Heart left ventricle (tissue), 16 donors: ENCODE measurements at regions of chr3 and their contacts with region 1.

Region 1: DNA sequence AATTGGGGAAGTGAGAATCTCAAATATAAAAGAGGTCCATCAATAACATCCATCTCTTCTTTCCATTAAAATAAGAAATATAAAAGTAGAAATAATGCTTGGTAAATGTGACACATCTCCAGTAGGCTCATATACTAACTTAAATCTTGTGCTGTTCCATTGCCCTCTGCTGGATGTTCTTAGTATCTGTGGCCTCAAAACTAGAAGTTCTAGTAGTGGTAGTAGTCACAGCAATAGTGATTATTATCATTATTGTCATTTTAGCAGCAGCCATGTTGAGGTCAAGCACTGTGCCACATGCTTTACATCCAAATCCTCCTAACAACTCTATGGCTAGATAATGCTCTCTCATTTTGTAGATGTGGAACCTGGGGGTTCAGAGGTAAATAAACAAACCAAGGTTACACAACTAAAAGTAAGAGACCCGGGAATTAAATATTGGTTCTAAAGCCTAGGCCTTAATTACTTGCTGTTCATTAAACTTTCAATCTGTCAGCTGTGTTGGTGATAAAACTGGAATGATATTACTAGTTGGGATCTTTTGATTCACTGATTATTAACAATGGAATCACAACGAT is 20.2 kb upstream of the BTLA start:
- DNase-seq: peak in 2 of 5 donors; percentile 22 to 29
- ATAC-seq: peak in 3 of 4 donors; percentile 64 to 79 (median 77)
- H3K4me3 ChIP-seq: no peak overlapping the region
- H3K27ac ChIP-seq: no peak overlapping the region
- H3K4me1 ChIP-seq: peaks cover 0 to 9% (median 0%) of the 10 kb centered on the region in 12 donors
- H3K27me3 ChIP-seq: no peaks in the 10 kb centered on the region
- CTCF ChIP-seq: peak; percentile 61 to 87 (median 75)
- POLR2A ChIP-seq: no peak

Region 2: DNA sequence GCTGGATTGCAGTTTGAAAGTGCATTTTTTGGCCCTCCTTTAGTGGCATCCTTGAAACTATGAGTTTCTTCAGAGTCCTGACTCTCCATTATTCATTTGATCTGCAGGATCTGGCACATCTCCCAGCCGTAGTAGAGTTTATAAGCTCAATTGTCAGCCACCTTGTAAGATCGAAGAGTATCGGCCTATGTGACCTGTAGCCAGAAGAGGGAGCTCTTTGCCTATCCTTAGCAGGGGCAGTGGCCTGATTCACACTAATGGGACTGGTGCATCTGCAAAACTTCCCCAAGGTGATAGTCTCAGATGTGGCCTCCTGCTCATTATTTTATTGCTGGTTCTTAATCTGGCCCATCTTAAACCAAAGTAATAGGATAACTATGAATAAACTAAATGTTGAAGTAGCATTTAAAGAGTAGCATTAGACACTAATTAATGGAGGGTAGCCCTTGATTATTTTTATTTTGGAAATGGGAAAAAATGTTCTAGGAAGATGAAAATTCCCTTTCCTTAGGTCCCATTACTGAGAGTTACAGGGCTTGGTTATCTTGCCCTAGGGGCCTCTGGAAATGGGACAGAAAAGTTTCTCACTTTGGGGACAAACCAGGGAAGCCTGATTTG is 407.6 kb before region 1 on chr3:
- intact Hi-C with region 1: loop called in 2 of 10 experiments (anchors 2 to 5 kb)
- DNase-seq: peak in 2 of 5 donors; percentile 39 to 40
- ATAC-seq: peak; percentile 64 to 86 (median 77)
- H3K4me3 ChIP-seq: no peak overlapping the region
- H3K27ac ChIP-seq: no peak overlapping the region
- H3K4me1 ChIP-seq: peaks cover 0 to 15% (median 8%) of the 10 kb centered on the region in 12 donors
- H3K27me3 ChIP-seq: no peaks in the 10 kb centered on the region
- CTCF ChIP-seq: peak; percentile 62 to 82 (median 70)
- POLR2A ChIP-seq: no peak

Region 3: GRCh38 chr3:112128843-112129727 is 390.4 kb before region 1 on chr3:
- intact Hi-C with region 1: loop called in 6 of 10 experiments (anchors 5 to 10 kb)
- DNase-seq: no peak
- ATAC-seq: no peak
- H3K4me3 ChIP-seq: no peak overlapping the region
- H3K27ac ChIP-seq: peak overlapping the region in 1 of 12 donors; percentile 13
- H3K4me1 ChIP-seq: peaks cover 0 to 55% (median 14%) of the 10 kb centered on the region in 12 donors
- H3K27me3 ChIP-seq: no peaks in the 10 kb centered on the region
- CTCF ChIP-seq: no peak
- POLR2A ChIP-seq: no peak

Region 4: DNA sequence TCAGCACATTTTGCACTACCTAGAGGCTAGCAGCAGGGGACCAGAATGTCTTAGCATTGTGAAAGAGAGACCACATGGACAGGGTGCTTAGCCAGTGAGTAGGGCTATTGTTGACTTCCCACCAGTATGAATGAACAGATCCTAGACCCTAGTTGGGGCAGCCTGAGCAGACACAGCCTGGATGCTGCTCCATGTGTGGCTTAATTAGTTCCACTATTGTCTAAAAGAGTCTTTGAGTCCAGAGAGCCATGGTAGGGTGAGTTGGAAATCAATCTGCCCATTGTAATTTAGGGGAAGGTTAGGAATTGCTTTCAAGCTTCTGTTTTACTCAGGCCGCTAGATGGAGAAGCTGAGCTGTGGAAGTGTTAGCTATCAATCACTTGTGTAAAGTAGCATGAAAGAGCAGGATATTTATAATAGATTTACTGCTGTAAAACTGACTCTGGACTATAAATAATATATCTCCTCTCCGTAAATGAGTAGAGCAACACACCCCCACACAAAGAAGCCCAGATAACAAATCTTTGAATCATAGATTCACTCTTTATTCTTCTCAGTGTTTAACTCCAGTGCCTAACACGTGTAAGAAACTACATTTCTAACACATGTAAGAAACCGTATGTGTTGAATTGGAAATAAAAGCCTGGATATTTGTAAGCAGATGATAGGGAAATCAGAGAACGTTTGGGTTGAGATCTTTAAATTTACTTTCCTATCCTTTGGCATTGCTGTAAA is 382.4 kb before region 1 on chr3:
- intact Hi-C with region 1: loop called in 7 of 10 experiments (anchors 5 to 10 kb)
- DNase-seq: no peak
- ATAC-seq: peak in 3 of 4 donors; percentile 38 to 63 (median 57)
- H3K4me3 ChIP-seq: no peak overlapping the region
- H3K27ac ChIP-seq: no peak overlapping the region
- H3K4me1 ChIP-seq: peaks cover 0 to 52% (median 0%) of the 10 kb centered on the region in 12 donors
- H3K27me3 ChIP-seq: no peaks in the 10 kb centered on the region
- CTCF ChIP-seq: peak in 11 of 12 donors; percentile 32 to 64 (median 45)
- POLR2A ChIP-seq: no peak

Region 5: DNA sequence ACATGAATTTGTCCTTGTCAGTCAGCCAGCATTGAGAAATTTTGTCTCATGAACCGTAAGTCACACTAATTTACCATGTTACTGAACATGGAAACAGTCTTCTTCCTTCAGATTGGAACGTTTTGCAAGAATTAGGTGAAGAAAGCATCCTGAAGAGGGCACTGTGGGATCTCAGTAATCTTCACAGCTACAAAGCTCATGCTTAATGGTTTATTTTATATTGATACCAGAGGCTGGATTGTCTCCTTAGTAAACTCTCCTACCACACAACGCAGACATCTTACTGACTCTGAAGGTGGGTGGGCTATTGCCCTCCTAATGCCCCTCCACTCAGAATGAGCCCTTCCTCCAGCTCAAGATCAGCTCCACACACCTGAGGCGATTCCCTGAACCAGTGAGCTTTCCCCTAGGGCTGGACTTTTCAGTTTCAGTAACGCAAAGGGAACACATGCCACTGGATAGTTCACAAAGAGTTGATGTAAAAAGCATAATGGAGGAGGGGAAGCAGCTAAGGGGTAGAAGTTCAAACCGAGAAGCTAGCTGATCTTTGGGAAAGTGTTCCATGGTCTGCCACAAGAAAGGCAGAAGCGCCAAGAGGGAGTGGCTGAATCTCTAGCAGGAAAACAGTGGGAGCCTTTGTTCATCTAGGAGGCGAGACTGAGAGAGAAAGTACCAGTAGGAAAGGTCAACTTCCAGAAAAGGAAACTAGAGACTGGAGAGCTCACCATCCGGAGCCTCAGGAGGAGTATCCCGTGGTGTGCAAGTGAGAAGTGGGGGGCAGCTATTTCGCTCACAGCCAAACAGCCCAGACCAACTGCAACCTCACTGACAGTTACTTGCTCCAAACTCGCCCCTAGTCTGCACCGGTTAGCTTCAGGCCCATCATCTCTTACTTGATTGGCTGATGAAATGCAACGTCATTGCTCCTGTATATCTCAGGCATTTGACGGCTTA is 225.9 kb before region 1 on chr3 and contains the start of gene SLC9C1:
- intact Hi-C with region 1: loop called in 6 of 10 experiments (anchors 2 to 5 kb)
- DNase-seq: peak in 2 of 5 donors; percentile 43 to 52
- ATAC-seq: peak; percentile 77 to 91 (median 88)
- H3K4me3 ChIP-seq: peak within 1 kb of the TSS; percentile 3 to 58 (median 50)
- H3K27ac ChIP-seq: peak within 1 kb of the TSS; percentile 39 to 78 (median 68)
- H3K4me1 ChIP-seq: peaks cover 0 to 23% (median 4%) of the 10 kb centered on the region in 12 donors
- H3K27me3 ChIP-seq: no peaks in the 10 kb centered on the region
- CTCF ChIP-seq: peak; percentile 40 to 77 (median 62)
- POLR2A ChIP-seq: no peak
- total RNA-seq, gene SLC9C1: 0.48 to 3.8 (median 1.4) TPM

Region 6: DNA sequence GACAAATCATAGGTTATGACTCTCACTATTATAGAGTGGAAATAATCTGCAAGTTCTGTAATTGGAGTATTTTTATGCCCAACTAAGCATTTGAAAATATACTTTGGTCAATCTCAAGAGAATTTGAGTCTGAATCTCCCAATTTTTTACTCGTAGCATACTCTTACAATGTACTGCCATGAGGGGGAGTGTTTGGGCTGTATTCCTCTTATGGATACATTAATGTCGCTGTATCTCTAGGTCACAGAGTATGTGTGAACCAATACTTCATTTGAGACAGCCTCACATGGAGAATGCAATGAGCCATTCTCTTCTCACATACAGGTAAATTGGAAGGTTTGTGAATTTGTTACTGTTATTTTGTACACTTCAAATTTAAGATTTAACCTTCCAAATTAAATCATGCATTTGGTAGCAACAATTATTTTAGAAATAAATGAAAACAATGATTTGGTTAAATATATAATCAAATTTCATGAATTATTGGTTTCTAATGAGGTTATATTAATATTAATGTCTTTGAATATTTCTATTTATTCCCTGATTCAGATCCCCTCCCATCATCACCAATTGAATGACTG is 192.1 kb before region 1 on chr3:
- intact Hi-C with region 1: loop called in 8 of 10 experiments (anchors 1 to 10 kb)
- DNase-seq: peak in 1 of 5 donors; percentile 20
- ATAC-seq: peak in 3 of 4 donors; percentile 71 to 84 (median 80)
- H3K4me3 ChIP-seq: no peak overlapping the region
- H3K27ac ChIP-seq: no peak overlapping the region
- H3K4me1 ChIP-seq: peaks cover 0 to 6% (median 0%) of the 10 kb centered on the region in 12 donors
- H3K27me3 ChIP-seq: peaks cover 0 to under 1% (median 0%) of the 10 kb centered on the region in 9 donors
- CTCF ChIP-seq: peak; percentile 22 to 68 (median 56)
- POLR2A ChIP-seq: no peak

Region 7: DNA sequence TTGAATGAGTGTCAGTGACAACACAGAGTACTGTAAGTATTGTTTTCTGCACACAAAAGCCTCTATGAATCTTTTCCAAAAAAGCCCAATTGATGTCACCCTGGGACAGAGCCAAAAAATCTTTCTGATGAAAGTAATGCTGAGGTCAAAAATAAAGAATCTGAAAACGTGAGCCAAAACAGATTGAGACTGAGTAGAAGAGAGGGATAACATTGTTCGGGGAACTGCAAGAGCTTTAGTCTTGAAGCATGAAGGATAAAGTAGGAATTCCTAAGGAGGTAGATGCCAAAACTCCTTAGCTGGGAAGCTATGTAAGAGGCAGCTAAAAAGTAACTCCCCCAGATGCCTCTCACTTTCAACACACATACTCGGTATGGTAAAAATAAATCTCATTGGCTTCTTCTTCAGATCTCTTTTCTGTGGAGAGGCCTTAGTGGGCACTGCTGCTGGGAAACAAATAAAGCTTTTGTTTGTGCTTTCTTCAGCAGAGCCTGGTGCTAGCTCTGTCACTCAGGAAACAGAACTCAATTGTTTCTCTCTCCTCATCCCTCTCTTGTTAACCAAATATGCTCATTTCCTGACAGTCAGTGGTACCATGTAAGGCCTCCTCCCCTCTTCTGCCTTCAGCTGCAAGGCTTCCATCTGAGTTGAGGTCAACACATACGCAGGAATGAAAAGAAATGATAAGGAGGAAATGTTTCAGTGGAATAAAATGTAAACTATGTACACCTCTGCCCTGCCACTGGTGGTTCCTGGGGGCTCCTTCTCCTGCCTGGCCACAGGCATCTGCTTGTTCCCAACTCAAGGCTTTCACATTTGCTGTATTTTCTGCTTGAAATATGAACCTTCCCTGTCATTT is 128.5 kb before region 1 on chr3:
- intact Hi-C with region 1: loop called in 1 of 10 experiments (anchors 10 kb)
- DNase-seq: no peak
- ATAC-seq: peak in 3 of 4 donors; percentile 39 to 63 (median 61)
- H3K4me3 ChIP-seq: no peak overlapping the region
- H3K27ac ChIP-seq: peak overlapping the region in 11 of 12 donors; percentile 44 to 83 (median 65)
- H3K4me1 ChIP-seq: peaks cover 0 to 37% (median 13%) of the 10 kb centered on the region in 12 donors
- H3K27me3 ChIP-seq: no peaks in the 10 kb centered on the region
- CTCF ChIP-seq: no peak
- POLR2A ChIP-seq: no peak